Posterior vena cava (tissue), 2 donors: ENCODE measurements at regions of chr6 and their contacts with region 1.

Region 1: DNA sequence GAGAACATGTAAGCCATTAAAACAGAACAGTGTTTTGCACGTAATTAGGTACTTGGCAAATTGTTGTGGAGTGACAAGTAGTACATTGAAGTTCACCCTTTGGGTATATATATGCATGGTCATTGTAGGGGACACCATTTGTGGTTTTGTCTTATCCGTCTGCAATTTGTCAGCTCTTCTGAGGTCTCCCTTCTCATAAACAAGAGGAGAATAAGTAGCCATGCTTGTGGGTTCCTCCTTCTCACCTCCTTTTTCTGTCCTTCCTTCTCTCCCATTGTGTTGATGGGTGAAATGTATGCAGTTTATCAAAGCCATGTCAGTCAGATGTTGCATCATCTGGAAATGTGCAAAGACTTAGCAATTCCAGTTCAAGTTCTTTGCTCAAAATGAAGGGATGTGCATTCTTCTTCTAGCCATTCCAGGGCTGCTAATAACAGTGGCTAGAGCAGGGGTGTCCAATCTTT is 70.9 kb downstream of the QKI start:
- DNase-seq: no peak

Region 2: DNA sequence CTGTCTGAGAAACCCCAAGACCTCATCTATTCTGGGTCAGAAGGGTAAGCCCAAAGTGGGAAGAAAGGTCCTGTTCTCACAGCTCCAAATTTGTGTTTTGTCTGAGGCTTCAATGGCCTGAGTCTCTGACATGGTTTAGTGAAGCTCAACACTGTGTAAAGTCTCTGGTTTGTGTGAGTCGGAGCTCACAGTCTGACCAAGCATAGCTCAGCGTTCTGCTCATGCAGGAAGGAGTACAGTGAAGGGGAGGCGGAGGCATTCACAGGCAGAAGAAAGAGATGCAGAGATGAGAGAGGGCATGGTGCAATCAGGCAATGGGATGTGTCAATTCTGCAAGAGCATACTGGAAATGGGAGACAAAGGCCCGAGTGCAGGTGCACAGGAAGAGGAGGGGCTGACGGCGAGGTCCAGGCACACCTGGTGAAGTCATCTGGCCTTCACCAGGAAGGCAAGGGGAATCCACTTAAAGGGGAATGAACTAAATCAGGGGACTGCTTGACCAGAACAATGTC is 1748.6 kb before region 1 on chr6:
- intact Hi-C with region 1: no loop called
- DNase-seq: no peak

Region 3: DNA sequence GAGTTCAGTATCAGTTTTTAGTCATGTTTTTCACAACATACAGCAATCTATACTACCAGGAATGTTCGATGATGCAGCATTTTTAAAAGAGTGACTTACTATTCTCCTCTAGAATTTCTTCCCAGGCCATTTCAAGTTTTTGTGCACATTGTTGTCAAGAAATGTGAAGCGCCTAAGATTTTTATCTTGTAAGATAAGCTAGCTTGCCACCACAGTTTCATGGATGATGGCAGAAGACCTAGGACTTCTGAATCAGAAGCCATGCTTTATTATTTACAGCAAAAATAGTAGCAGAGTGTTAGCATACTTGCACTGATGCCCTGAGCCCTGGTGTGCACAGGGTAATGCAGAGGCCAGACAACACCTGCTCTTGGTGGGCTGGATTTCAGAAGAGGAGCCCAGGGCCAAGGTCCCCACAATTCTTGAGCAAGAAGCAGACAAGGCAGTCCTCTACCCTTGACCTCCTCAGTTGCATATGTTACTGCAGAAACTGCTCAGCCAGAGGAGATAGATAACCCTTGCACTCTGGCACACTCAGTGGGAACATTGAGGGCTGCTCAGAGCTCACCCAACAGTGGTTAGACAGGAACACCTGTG is 28.2 kb after region 1 on chr6:
- intact Hi-C with region 1: loop called in 1 of 2 experiments (anchors 2 kb)
- DNase-seq: peak; percentile 22

Region 4: GRCh38 chr6:163543321-163543720 is 57.9 kb after region 1 on chr6:
- intact Hi-C with region 1: no loop called
- DNase-seq: no peak